Thyroid gland (tissue), 4 donors: ENCODE measurements at regions of chr11 and their contacts with region 1.

Region 1: DNA sequence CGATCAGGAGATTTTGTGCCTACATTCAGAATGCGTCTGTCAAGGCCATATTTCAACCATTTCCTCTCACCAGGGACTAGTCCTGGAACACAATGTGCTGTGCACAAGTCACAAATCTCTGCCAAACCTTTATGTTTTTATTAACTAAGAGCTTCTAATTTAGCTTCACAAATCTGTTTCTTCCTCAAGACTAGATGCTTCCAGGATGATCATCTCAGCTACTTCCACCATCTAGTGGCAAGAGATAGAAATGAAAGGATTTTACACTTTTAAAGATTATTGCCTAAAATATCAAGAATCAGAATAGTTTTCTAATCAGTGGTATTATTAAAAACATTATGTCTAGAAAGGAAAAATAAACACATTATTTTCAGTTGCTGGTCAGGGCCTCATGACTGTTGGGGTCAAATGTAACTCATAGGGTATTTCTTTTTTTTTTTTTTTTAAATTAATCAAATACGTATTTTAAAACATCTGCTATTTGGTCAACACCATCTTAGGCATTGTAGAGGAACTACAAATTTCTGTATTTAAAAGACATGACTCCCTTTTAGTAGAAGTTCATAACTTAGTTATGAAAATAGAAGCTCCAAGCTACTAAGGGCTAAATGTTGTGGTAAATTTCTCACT is 1102.6 kb downstream of the DLG2 start:
- DNase-seq: no peak
- H3K4me3 ChIP-seq: no peak overlapping the region
- H3K27ac ChIP-seq: no peak overlapping the region
- H3K4me1 ChIP-seq: no peaks in the 10 kb centered on the region
- H3K27me3 ChIP-seq: no peaks in the 10 kb centered on the region
- CTCF ChIP-seq: peak in 5 of 6 experiments; percentile 20 to 77 (median 62)
- POLR2A ChIP-seq: no peak

Region 2: GRCh38 chr11:84398017-84398626 is 126.4 kb before region 1 on chr11:
- intact Hi-C with region 1: loop called (anchors 10 kb)
- DNase-seq: peak; percentile 16 to 40
- H3K4me3 ChIP-seq: no peak overlapping the region
- H3K27ac ChIP-seq: no peak overlapping the region
- H3K4me1 ChIP-seq: no peaks in the 10 kb centered on the region
- H3K27me3 ChIP-seq: no peaks in the 10 kb centered on the region
- CTCF ChIP-seq: peak in 4 of 6 experiments; percentile 22 to 71 (median 56)
- POLR2A ChIP-seq: no peak